ENCODE measurements at regions of chr9 and their contacts with region 1.

Region 1: DNA sequence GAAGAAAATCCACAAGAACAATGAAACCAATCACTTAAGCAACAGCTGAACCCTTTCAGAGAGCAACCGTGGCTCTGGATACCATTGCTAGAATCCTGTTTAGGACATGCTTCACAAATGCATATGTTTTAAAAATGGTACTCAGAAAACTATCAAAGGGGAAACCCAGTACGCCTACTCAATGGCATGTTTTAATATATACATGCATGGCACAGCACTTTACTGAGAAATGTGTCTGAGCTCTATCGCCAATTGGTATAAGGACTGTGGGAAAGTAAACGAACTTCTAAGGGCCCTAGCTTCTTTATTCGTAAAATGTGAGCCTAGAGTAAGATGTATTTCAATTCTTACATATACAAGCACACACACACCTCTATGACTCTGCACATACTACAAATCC is 72.3 kb downstream of the PTBP3 start:
- DNase-seq: no peak
- H3K4me3 ChIP-seq: no peak overlapping the region
- H3K27ac ChIP-seq: no peak overlapping the region
- H3K4me1 ChIP-seq: no peaks in the 10 kb centered on the region
- H3K27me3 ChIP-seq: no peaks in the 10 kb centered on the region
- CTCF ChIP-seq: no peak
- POLR2A ChIP-seq: no peak

Region 2: GRCh38 chr9:112249277-112249676 is 11.9 kb before region 1 on chr9:
- CTCF ChIA-PET with region 1: interaction called, 10 read pairs
- POLR2A ChIA-PET with region 1: no interaction called
- dilution Hi-C with region 1: no loop called
- intact Hi-C with region 1: no loop called
- DNase-seq: peak; percentile 85
- H3K4me3 ChIP-seq: peak overlapping the region in 2 of 3 experiments; percentile 41 to 73
- H3K27ac ChIP-seq: peak overlapping the region; percentile 92
- H3K4me1 ChIP-seq: peaks cover 34% of the 10 kb centered on the region
- H3K27me3 ChIP-seq: no peaks in the 10 kb centered on the region
- CTCF ChIP-seq: no peak
- POLR2A ChIP-seq: no peak

Measured in endothelial cell of umbilical vein (primary cell).